Pancreas (tissue), 10 donors: ENCODE measurements at regions of chr12 and their contacts with region 1.

Region 1: GRCh38 chr12:131642101-131642540 is 68.8 kb upstream of the SFSWAP start:
- DNase-seq: peak in 1 of 6 donors; percentile 27
- ATAC-seq: no peak
- H3K4me3 ChIP-seq: no peak overlapping the region
- H3K27ac ChIP-seq: no peak overlapping the region
- H3K4me1 ChIP-seq: no peaks in the 10 kb centered on the region
- H3K27me3 ChIP-seq: peaks cover 0 to 3% (median 0%) of the 10 kb centered on the region in 4 donors
- CTCF ChIP-seq: no peak

Region 2: GRCh38 chr12:131311764-131312163 is 330.4 kb before region 1 on chr12:
- intact Hi-C with region 1: loop called in 1 of 3 experiments (anchors 5 kb)
- DNase-seq: no peak
- ATAC-seq: no peak
- H3K4me3 ChIP-seq: no peak overlapping the region
- H3K27ac ChIP-seq: no peak overlapping the region
- H3K4me1 ChIP-seq: no peaks in the 10 kb centered on the region
- H3K27me3 ChIP-seq: no peaks in the 10 kb centered on the region
- CTCF ChIP-seq: no peak